ENCODE measurements at regions of chr9 and their contacts with region 1.

Region 1: GRCh38 chr9:77922591-77922990 is 109.0 kb downstream of the GNAQ start:
- DNase-seq: peak in 1 of 4 experiments; percentile 61
- ATAC-seq: peak; percentile 80
- H3K4me3 ChIP-seq: no peak overlapping the region
- H3K27ac ChIP-seq: peak overlapping the region; percentile 56; the same call in 2 of the 3 replicates
- H3K4me1 ChIP-seq: peaks cover 4 to 26% of the 10 kb centered on the region in 2 experiments; a peak in 4 of 5 replicates
- H3K27me3 ChIP-seq: no peaks in the 10 kb centered on the region
- CTCF ChIP-seq: no peak
- EP300 ChIP-seq: no peak; the same call in 1 of the 2 replicates
- POLR2A ChIP-seq: no peak
- RAD21 ChIP-seq: no peak

Region 2: GRCh38 chr9:77820293-77820954 is 102.2 kb before region 1 on chr9:
- CTCF ChIA-PET with region 1: no interaction called
- POLR2A ChIA-PET with region 1: no interaction called
- in situ Hi-C with region 1: no loop called
- intact Hi-C with region 1: no loop called
- DNase-seq: peak; percentile 15 to 75 (median 40)
- ATAC-seq: peak; percentile 91
- H3K4me3 ChIP-seq: no peak overlapping the region; the same call in 1 of the 2 replicates
- H3K27ac ChIP-seq: peak overlapping the region; percentile 84
- H3K4me1 ChIP-seq: peaks cover 3 to 21% of the 10 kb centered on the region in 2 experiments; a peak in 3 of 5 replicates
- H3K27me3 ChIP-seq: no peaks in the 10 kb centered on the region
- CTCF ChIP-seq: no peak
- EP300 ChIP-seq: peak; percentile 71; the same call in 1 of the 2 replicates
- POLR2A ChIP-seq: no peak
- RAD21 ChIP-seq: no peak

Region 3: GRCh38 chr9:77896938-77897667 is 25.5 kb before region 1 on chr9:
- CTCF ChIA-PET with region 1: no interaction called
- POLR2A ChIA-PET with region 1: no interaction called
- in situ Hi-C with region 1: no loop called
- intact Hi-C with region 1: no loop called
- DNase-seq: no peak
- ATAC-seq: no peak
- H3K4me3 ChIP-seq: no peak overlapping the region
- H3K27ac ChIP-seq: no peak overlapping the region
- H3K4me1 ChIP-seq: peaks cover 5 to 33% of the 10 kb centered on the region in 2 experiments; a peak in 4 of 5 replicates
- H3K27me3 ChIP-seq: no peaks in the 10 kb centered on the region
- CTCF ChIP-seq: peak; percentile 24 to 29 (median 24); a peak in 1 of 6 replicates
- EP300 ChIP-seq: no peak
- POLR2A ChIP-seq: no peak
- RAD21 ChIP-seq: no peak

Region 4: DNA sequence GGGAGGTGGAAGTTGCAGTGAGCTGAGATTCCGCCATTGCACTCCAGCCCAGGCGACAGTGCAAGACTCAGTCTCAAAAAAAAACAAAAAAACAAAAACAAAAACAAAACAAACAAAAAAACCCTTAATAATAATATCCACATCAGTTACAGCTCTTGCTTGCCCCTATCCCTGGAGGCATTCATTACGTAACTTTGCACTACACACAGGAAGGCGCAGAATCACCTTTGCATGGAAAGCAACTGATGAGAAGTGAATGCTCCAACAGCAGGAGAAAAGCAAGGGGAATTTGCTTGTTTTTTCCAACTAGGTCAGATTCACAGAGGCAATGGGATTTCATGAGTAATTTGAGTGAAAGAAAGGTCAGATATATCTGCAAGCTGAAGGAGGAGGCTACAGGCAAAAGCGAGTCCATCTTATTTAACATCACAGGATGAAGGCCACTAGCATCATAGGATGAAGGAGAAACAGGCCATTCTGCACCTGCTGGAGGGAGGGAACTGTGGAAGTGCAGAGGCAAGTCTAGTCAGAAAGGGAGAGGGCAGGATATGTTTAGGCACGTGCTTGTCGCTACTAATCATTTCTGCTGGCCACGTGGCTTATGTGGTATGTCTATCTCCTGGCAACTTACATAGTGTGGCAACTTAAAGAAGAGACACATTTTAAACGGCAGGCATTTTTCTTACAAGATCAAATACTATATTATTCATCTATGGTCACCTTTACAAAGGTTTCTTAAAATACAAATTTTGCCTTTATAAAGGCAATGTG is 34.9 kb after region 1 on chr9:
- CTCF ChIA-PET with region 1: no interaction called
- POLR2A ChIA-PET with region 1: no interaction called
- in situ Hi-C with region 1: no loop called
- intact Hi-C with region 1: loop called (anchors 2 kb)
- DNase-seq: peak in 1 of 4 experiments; percentile 20
- ATAC-seq: peak; percentile 8; the same call in 1 of the 3 replicates
- H3K4me3 ChIP-seq: no peak overlapping the region
- H3K27ac ChIP-seq: no peak overlapping the region; the same call in 2 of the 3 replicates
- H3K4me1 ChIP-seq: peaks cover 5 to 66% of the 10 kb centered on the region in 2 experiments
- H3K27me3 ChIP-seq: no peaks in the 10 kb centered on the region
- CTCF ChIP-seq: no peak
- EP300 ChIP-seq: no peak
- POLR2A ChIP-seq: no peak
- RAD21 ChIP-seq: no peak